ENCODE measurements at regions of chr17 and their contacts with region 1.

Region 1: DNA sequence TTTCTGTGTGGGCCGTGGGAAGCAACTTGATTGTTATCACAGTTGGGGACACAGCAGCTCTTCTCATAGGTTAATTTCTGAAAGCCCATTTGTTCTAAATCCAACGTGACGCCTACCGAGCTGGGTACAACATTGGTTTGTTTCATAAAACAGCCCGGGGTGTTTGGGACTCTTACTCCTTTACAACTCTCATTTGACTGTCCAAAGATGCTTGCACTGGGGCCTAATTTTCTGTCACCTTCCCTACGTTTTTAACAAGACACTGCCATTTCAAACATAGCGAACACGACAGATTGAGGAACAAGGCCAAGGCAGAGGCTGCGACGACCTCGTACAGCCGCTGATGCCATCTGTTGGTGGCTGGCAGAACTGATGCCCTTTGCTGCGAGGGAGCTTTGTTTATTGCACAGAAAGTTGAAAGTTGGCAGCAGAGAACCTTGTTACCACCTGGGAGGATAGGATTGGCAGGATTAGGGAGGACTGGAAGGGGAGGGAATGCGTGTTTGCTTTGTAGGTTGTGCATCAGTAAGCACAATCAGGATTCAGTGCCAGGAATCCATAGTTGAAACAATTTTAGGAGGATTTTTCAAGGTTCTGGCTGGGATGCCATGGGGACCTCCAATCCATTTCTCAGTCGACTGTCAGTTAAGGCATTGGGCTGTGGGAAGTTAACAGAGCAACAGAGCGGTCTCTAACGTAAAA is 98.3 kb downstream of the PITPNC1 start:
- DNase-seq: peak; percentile 84
- H3K4me3 ChIP-seq: no peak overlapping the region
- H3K27ac ChIP-seq: peak overlapping the region; percentile 11 to 42; a peak in 2 of 4 replicates
- H3K4me1 ChIP-seq: peaks cover 4 to 14% of the 10 kb centered on the region in 2 experiments; a peak in 3 of 4 replicates
- H3K27me3 ChIP-seq: no peaks in the 10 kb centered on the region
- CTCF ChIP-seq: peak; percentile 99
- EP300 ChIP-seq: no peak
- RAD21 ChIP-seq: peak; percentile 100

Region 2: DNA sequence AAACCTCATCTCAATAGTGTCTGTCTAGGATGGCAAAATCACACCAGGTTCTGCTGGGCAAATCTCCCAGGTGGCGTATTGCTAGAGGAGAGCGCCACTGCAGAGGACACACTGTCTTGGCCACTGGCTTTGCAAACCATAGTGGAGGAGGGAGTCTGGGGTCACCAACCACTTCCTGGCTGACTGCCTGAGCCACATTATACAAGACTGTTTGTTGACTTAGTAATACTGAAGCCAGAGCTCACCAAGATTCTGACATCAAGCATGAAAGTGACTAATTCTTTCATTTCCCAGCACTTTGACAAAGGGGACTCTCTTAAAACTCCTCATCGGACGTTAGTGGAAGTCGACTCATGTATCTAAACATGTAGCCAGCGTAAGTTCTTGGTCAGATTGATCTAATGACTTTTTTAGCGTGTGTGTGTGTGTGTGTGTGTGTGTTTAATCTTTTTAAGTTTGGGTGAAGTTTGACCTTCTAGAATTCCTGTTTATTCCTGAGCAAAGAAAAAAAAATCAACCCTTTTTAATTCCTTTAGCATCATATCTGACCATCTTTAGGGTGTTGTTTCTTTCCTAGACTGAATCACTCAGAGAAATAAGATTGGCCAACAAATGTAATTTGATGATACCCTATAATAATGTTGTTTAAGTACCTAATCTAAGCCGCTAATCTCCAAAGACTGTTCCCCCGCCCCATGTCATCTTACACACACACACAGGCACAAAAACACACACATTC is 84.6 kb before region 1 on chr17:
- CTCF ChIA-PET with region 1: interaction called, 234 read pairs
- POLR2A ChIA-PET with region 1: interaction called, 3 read pairs
- DNase-seq: no peak
- H3K4me3 ChIP-seq: no peak overlapping the region
- H3K27ac ChIP-seq: peak overlapping the region in 1 of 2 experiments; percentile 93; a peak in 3 of 4 replicates
- H3K4me1 ChIP-seq: peaks cover 11 to 12% of the 10 kb centered on the region in 2 experiments
- H3K27me3 ChIP-seq: no peaks in the 10 kb centered on the region
- CTCF ChIP-seq: no peak; the same call in 1 of the 2 replicates
- EP300 ChIP-seq: peak in 1 of 2 experiments; percentile 67; a peak in 1 of 4 replicates
- RAD21 ChIP-seq: no peak

Region 3: GRCh38 chr17:67431249-67432048 is 43.9 kb before region 1 on chr17:
- CTCF ChIA-PET with region 1: interaction called, 18 read pairs
- POLR2A ChIA-PET with region 1: no interaction called
- DNase-seq: no peak
- H3K4me3 ChIP-seq: 0 out of 4 replicates have a peak overlapping the region, but pooled peaks of 1 of the 2 experiments have one; percentile 15
- H3K27ac ChIP-seq: peak overlapping the region; percentile 44 to 99
- H3K4me1 ChIP-seq: peaks cover 4 to 15% of the 10 kb centered on the region in 2 experiments; a peak in 2 of 4 replicates
- H3K27me3 ChIP-seq: no peaks in the 10 kb centered on the region
- CTCF ChIP-seq: no peak
- EP300 ChIP-seq: peak in 1 of 2 experiments; percentile 17; a peak in 1 of 4 replicates
- RAD21 ChIP-seq: no peak

Region 4: DNA sequence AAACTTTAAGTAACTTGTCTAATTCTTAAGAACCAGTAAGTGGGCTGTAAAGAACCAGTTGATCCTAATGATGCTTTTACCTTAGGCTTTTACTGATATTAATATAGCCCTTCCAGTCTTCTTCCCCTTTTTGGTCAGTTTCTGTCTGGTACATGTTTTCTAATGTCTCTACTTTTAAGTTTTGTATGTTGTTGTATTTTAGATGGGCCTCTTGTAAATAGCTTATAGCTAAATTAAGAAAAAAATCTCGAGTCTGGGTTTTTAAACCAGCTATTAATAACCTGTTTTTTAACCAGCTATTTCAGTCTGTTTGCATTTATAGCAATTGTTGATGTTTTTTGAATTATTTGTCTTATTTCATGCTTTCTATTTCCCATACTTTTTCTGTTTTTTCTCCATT is 19.3 kb before region 1 on chr17:
- CTCF ChIA-PET with region 1: interaction called, 10 read pairs
- POLR2A ChIA-PET with region 1: no interaction called
- DNase-seq: no peak
- H3K4me3 ChIP-seq: no peak overlapping the region
- H3K27ac ChIP-seq: no peak overlapping the region
- H3K4me1 ChIP-seq: no peaks in the 10 kb centered on the region
- H3K27me3 ChIP-seq: no peaks in the 10 kb centered on the region
- CTCF ChIP-seq: no peak
- EP300 ChIP-seq: no peak
- RAD21 ChIP-seq: no peak

Region 5: DNA sequence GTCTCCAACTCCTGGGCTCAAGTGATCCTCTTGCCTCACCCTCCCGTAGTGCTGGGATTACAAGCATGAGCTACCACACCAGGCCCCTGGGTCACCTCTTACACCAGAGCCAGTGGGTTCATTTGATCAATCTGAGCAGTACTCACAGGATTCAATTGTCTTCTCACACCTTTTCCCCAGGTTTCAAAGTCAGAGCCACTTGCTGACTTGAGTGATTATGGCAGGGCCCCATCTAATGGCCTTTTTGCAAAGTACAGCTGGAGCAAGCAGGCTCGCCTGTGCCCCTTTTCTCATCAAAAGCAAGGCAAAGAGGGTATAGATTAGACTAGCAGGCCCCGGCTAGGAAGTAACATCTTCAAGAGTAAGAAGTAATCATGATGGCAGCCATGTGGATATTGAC is 127.6 kb after region 1 on chr17:
- CTCF ChIA-PET with region 1: interaction called, 111 read pairs
- POLR2A ChIA-PET with region 1: interaction called, 6 read pairs
- DNase-seq: peak; percentile 42
- H3K4me3 ChIP-seq: no peak overlapping the region
- H3K27ac ChIP-seq: no peak overlapping the region
- H3K4me1 ChIP-seq: peaks cover 24 to 33% of the 10 kb centered on the region in 2 experiments
- H3K27me3 ChIP-seq: no peaks in the 10 kb centered on the region
- CTCF ChIP-seq: peak; percentile 57
- EP300 ChIP-seq: no peak
- RAD21 ChIP-seq: peak; percentile 85

Region 6: DNA sequence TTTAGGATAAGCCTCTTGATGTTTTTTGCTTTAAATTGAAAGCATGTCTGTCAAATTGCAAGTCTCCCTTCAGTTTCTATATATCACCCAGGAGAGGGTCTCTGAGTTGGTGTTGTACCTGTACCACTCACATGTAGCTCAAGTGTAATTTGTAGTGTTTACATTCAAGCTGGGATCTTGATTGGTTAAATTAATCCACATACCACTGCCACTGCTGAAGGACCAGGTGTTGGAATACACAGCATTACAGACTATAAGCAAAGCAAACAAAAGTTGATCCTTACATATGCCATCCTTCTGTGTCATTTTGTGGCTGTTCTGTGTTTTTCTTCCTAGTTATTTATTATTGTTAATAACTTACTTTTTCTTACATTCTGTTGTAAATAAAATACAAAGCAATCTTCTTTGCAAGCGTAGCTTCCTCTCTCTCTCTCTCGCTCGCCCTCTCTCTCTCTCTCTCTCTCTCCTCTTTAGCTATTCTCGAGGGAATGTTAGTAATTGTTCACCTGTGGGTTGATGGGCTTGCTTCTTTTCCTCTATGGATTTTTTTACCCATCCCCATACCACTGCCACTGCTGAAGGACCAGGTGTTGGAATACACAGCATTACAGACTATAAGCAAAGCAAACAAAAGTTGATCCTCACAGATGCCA is 221.6 kb after region 1 on chr17:
- CTCF ChIA-PET with region 1: interaction called, 12 read pairs
- POLR2A ChIA-PET with region 1: no interaction called
- DNase-seq: no peak
- H3K4me3 ChIP-seq: no peak overlapping the region
- H3K27ac ChIP-seq: 0 out of 4 replicates have a peak overlapping the region, but pooled peaks of 1 of the 2 experiments have one; percentile 4
- H3K4me1 ChIP-seq: no peaks in the 10 kb centered on the region
- H3K27me3 ChIP-seq: no peaks in the 10 kb centered on the region
- CTCF ChIP-seq: no peak
- EP300 ChIP-seq: no peak
- RAD21 ChIP-seq: no peak

Region 7: DNA sequence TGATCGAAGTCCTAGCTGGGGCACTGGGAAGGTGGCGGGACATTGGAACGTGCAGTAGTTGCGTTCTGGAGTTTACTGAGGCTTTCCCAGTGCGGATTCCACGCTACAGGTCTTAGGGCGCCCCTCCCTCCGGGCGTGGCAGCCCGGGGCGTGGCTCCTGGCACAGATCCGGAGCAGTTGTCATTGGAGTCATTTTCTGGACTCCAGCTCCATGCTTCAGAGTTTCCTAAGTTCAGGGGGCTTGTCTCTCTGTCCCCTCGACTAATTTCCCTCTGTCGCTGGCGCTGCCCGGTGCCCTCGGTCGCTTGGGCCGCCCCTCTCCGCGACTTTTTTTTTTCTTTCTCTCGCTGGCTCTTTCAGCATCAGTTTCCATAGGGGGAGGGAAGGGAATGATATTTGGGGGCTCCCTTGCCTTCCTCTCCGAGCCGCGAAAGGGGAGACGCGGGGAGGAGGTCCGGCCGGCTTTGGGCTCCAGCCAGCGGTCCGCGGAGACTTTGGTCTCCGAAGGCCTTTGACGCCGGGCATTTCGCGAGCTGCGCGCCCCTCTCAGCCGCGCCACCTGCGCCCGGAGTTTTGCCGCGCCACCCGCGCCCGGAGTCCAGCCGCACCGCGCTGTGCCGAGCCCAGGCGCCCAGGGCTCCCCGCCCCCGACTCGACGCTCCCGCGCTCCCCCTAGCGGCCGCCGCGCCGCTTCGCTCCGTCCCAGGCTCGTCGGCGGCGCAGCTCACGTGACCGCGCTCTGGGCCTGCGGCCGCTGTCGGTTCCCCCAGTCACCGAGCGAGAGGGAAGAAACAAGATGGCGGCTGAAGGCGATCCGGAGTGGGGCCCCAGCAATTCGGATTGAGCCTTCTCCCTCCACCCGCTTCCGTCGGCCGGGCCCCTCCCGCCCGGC is 349.6 kb after region 1 on chr17 and contains the start of gene BPTF:
- CTCF ChIA-PET with region 1: no interaction called
- POLR2A ChIA-PET with region 1: no interaction called
- DNase-seq: peak; percentile 99
- H3K4me3 ChIP-seq: peak within 1 kb of the TSS; percentile 77 to 87
- H3K27ac ChIP-seq: peak within 1 kb of the TSS; percentile 34 to 94; a peak in 3 of 4 replicates
- H3K4me1 ChIP-seq: peaks cover 12 to 20% of the 10 kb centered on the region in 2 experiments; a peak in 3 of 4 replicates
- H3K27me3 ChIP-seq: no peaks in the 10 kb centered on the region
- CTCF ChIP-seq: peak; percentile 93
- EP300 ChIP-seq: peak in 1 of 2 experiments; percentile 47; a peak in 1 of 4 replicates
- RAD21 ChIP-seq: peak; percentile 56
- polyA plus RNA-seq, gene BPTF: 51.9 and 61.4 TPM in 2 replicates